GM18951 (cell line): ENCODE measurements at regions of chr9 and their contacts with region 1.

Region 1: GRCh38 chr9:105157130-105157583 is 87.3 kb upstream of the SLC44A1 start:
- POLR2A ChIP-seq: no peak

Region 2: DNA sequence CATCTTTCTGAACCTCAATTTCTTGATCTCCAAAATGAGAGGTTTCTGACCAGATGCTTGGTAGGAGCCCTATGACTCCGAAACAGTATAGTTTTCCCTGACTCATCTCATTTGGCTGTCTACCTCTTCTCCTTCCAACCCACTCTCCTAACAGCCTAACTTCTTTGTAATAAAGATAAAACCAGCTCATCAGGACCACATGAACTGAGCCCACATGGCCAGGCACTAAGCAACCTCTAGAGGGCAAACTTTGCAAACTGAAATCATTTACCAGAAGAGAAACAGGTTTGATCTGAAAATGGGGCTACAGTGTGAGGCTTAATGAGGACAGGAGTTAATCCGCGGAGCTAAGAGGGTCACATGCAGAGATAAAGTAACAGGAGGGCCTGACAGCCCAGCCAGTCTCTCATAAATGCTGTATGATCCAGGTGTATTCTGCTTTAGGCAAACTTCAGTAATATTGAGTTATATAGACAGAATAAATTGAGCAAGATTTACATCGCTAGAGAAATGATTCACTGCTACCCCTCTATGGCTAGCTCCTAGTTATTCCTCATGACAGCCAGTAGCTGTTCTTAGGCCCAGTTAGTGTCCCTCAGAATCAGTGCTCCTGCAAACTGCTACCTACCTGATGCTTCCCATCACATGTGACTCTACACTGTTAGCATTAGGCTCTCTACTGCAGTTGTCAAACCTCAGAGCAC is 293.8 kb before region 1 on chr9:
- in situ Hi-C with region 1: loop called (anchors 25 kb)
- POLR2A ChIP-seq: no peak

Region 3: GRCh38 chr9:105483618-105484017 is 326.5 kb after region 1 on chr9:
- in situ Hi-C with region 1: no loop called
- POLR2A ChIP-seq: no peak